ENCODE measurements at regions of chr2 and their contacts with region 1.

Region 1: DNA sequence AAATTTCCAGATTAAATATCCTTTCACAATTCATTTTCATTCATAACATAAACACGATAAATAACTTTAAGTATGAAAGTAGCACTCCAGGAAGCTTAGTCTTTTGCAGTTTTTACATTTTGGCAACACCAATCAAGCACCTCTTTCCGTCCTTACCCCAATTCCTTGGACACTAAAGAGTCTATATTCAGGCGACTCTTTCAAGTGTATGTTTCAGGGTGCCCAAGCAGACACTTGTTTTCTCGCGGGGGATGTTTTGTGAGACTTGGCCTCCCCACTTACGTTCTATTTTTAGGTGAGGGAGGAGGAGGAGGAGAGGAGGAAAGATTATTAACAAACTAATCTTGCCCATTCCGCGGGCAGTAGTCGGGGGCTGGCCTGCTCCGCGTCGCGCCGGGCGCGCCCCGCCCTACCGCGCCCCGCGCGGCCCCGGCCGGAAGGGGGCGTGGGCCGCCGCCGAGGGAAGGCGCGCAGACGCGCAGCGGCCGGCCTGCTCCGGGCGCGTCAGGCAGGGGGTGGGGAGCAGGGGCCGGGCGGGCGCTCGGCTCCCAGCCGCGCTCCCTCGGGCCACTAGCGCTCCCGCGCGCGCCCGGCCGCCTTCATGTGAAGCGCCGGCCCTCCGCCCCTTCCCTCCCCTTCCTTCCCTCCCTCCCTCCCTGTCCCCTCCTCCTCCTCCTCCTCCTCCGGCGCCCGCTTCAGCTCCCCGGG is at the start of gene ITPRID2:
- DNase-seq: peak; percentile 84
- H3K4me3 ChIP-seq: peak within 1 kb of the TSS; percentile 84
- H3K27ac ChIP-seq: no peak within 1 kb of the TSS
- H3K4me1 ChIP-seq: peaks cover 18% of the 10 kb centered on the region
- CTCF ChIP-seq: no peak
- total RNA-seq, gene ITPRID2: 25.9 and 28.8 TPM in 2 replicates

Region 2: DNA sequence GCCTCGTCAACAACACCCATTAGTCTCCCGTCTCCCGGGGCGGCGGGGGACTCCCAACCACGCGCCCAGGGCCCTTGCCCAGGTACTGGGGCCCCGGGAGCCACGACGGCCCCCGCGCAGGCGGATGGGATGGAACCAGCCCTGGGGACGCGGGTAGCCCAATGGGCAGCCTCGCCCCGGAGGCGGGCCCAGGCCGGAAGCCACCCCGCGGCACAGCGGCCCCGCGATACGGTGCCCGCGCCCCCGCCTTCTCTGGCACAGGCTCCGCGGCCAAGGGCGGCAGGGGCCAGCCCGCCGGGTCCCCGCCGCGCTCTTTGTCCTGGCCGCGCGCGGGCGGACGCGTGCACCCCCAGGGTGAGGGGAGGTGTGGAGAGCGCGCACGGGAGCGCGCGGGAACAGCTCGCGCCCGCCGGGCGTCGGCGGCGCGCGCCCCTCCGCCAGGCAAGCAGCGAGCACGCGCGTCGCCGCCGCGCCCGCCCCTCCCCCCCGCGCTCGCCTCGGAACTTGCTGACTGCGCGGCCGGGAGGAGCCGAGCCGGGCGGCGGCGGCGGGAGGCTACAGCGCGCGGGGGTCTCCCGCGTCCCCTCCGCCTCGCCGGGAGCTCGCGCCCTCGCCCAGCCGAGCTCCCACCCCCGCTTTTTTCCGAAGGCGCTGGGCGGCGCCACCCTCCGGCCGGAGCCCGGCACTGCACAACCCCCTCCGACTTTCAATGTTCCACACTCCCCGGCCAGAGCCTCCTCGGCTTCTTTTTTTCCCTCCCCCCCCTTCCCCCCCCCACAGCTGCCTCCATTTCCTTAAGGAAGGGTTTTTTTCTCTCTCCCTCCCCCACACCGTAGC is 911.1 kb before region 1 on chr2 and contains the start of gene UBE2E3:
- CTCF ChIA-PET with region 1: no interaction called
- POLR2A ChIA-PET with region 1: no interaction called
- intact Hi-C with region 1: loop called (anchors 5 kb)
- DNase-seq: peak; percentile 81
- H3K4me3 ChIP-seq: peak within 1 kb of the TSS; percentile 88
- H3K27ac ChIP-seq: no peak within 1 kb of the TSS
- H3K4me1 ChIP-seq: peaks cover 38% of the 10 kb centered on the region
- CTCF ChIP-seq: peak; percentile 73
- total RNA-seq, gene UBE2E3: 26.4 and 33.7 TPM in 2 replicates

Region 3: DNA sequence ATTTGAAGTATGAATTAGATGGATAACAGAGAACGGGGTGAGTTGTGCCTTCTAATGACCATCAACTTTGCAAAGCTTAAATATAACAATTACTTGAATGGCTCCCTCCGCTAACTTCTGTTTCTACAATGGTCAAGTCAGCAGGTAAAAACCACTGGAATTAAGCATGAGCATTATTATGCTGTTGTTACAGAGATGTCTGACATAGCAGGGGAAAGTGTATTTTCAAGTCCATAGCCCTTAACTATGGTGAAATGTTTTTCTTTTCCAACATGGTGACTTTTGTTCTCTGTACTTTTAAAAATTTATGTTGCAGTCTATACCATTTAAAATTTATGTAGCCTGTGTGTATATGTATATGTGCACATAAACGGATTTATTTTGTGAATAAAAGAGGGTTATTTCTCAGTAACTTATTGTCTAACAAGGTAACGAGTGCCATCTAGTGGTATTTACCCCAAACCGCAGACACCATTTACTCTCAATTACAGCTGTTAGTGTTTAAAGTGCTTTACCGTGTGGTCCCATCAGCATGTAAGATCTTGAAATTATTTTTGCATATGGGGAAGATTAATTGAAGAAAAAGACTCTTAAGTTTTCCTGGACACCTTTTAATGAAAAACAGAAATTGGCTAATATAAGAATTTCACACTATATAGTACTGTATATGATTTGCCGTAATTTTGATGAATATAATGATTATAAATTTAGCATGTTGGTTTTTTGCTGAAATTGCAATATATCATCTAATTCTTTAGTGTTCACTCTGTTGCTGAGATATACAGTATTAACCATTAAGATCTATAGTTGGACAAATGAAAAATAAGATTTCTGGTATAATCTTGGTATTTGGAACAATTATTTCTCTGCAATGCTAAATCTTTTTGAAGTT is 832.8 kb before region 1 on chr2:
- CTCF ChIA-PET with region 1: no interaction called
- POLR2A ChIA-PET with region 1: interaction called, 14 read pairs
- intact Hi-C with region 1: no loop called
- DNase-seq: peak; percentile 62
- H3K4me3 ChIP-seq: no peak overlapping the region
- H3K27ac ChIP-seq: no peak overlapping the region
- H3K4me1 ChIP-seq: no peaks in the 10 kb centered on the region
- CTCF ChIP-seq: peak; percentile 100

Region 4: GRCh38 chr2:181466661-181467576 is 424.5 kb before region 1 on chr2:
- CTCF ChIA-PET with region 1: no interaction called
- POLR2A ChIA-PET with region 1: no interaction called
- intact Hi-C with region 1: loop called (anchors 10 kb)
- DNase-seq: peak; percentile 80
- H3K4me3 ChIP-seq: no peak overlapping the region
- H3K27ac ChIP-seq: no peak overlapping the region
- H3K4me1 ChIP-seq: peaks cover 13% of the 10 kb centered on the region
- CTCF ChIP-seq: peak; percentile 98

Region 5: DNA sequence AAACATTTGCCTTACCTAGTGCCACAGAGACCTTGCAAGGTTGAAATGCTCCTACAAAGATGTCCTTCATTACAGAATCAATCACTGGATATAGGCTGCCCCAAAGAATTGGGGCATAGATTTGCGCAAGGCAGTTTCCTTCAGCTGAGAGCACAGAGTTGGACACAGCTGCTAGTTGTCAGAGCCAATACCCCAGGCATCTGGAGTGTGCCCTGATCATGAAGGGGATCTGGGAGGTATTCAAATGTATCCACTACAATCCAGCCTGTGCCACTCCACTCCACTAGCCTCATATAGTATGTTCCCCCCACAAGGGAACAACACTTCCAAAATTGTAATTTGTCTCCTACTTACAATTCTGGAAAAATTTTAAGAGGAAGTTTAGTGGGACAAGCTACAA is 62.2 kb before region 1 on chr2:
- CTCF ChIA-PET with region 1: no interaction called
- POLR2A ChIA-PET with region 1: no interaction called
- intact Hi-C with region 1: no loop called
- DNase-seq: no peak
- H3K4me3 ChIP-seq: no peak overlapping the region
- H3K27ac ChIP-seq: no peak overlapping the region
- H3K4me1 ChIP-seq: no peaks in the 10 kb centered on the region
- CTCF ChIP-seq: no peak

Region 6: DNA sequence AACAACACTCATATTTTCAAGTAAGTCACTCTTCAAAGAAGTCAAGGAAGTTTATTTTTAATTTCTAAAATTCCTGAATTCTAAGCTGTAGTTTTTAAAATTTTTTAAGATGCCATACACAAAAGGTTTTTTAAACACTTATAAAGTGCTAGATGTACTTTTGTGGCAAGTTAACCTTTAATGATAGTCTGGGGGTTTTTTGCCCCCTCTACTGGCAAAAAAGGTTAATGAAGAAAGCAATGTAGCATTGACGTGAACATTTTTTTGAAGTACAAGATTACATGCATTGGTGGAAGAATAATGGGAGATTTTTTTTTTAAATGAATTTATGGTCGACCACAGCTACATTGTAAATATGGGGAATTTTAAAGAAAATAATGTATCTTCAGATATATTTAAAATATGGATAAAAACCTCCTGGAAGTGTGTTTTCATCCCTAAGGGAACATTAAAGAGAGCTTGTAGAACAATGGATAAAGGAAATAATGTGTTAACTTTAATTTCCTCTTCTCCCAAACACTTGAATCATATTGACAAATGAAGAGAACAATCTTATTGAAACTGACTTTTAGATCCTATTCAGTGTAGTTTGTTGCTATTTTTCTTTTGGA is 12.7 kb after region 1 on chr2:
- CTCF ChIA-PET with region 1: no interaction called
- POLR2A ChIA-PET with region 1: interaction called, 21 read pairs
- intact Hi-C with region 1: no loop called
- DNase-seq: peak; percentile 42
- H3K4me3 ChIP-seq: no peak overlapping the region
- H3K27ac ChIP-seq: no peak overlapping the region
- H3K4me1 ChIP-seq: peaks cover 15% of the 10 kb centered on the region
- CTCF ChIP-seq: peak; percentile 91

Region 7: GRCh38 chr2:181910028-181910831 is 18.8 kb after region 1 on chr2:
- CTCF ChIA-PET with region 1: no interaction called
- POLR2A ChIA-PET with region 1: interaction called, 21 read pairs
- intact Hi-C with region 1: no loop called
- DNase-seq: no peak
- H3K4me3 ChIP-seq: no peak overlapping the region
- H3K27ac ChIP-seq: no peak overlapping the region
- H3K4me1 ChIP-seq: peaks cover 10% of the 10 kb centered on the region
- CTCF ChIP-seq: no peak

Region 8: DNA sequence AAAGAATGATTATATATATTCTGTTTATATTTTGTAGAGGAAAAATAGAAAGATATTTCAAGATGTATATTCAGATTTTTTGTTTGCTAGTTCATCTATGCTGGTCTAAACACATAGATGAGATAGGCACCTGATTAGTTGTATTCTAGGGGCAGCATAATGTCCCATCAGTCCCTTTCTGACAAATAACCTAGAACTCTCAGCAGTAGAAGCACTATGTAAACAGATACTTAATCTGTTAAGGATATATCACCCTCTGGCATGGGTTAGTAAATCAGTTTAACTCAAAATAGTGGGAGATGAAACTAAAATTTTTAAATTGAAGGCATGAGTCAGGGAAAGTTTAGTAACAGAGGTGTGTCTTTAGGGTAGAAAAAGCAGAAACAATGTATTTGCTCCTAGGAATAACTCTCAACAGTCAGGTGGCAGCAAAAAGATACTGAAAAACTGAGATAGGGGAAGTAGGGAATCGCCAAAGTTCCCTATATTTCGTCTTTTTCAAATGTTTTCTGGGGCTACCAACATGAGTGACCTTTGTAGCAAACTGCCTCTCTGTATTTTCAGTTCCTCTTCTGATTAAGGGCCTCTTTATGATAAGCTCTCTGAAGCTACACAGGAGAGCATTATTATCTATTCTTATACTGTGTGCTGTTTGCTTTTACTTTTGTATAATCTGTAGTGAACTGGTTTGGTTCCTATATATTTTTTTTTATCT is 99.9 kb after region 1 on chr2:
- CTCF ChIA-PET with region 1: no interaction called
- POLR2A ChIA-PET with region 1: no interaction called
- intact Hi-C with region 1: loop called (anchors 5 kb)
- DNase-seq: peak; percentile 68
- H3K4me3 ChIP-seq: peak overlapping the region; percentile 32
- H3K27ac ChIP-seq: peak overlapping the region; percentile 57
- H3K4me1 ChIP-seq: peaks cover 17% of the 10 kb centered on the region
- CTCF ChIP-seq: no peak